ENCODE measurements at regions of chr19 and their contacts with region 1.

Region 1: DNA sequence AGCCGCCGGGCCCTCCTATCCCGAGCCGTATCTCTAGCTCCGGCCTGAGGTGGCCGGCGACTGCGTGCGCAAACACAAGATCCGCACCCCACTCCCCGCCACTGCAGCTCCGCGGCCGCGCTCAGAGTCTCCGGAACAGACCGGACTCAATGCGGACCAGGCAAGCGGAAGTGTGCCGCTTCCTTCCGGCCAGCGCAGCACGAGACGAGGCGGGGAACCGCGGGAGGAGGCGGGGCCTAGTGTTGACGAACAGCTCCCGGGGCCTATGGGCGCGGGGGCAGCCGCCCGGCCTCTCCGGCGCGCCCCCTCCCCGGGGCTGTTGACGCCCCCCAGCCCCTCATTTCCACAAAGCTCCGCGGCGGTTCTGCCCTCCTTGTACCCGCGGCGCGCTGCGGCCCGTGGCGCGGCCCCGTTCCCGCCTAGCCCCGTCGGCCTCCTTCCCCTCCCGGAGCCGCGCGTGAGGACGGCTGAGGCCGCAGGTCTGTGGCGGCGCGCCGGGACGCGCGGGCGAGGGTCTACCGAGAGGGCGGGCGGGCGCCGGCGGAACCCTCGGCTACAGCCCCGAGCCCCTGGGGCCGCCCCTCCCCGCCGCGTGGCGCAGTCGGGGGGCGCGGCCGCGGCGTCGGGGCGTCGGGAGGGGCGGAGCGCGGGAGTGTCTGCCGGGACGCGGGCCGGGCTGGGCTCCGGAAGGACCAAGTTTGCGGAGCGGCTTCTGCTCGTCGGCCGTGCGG is at the start of gene DPY19L3:
- DNase-seq: peak; percentile 78 to 94 (median 84)
- ATAC-seq: peak; percentile 87 to 89
- H3K4me3 Mint-ChIP-seq: peak within 1 kb of the TSS; percentile 79 to 94 (median 90)
- H3K27ac Mint-ChIP-seq: peak within 1 kb of the TSS; percentile 57 to 94 (median 94)
- H3K4me1 Mint-ChIP-seq: peaks cover 10 to 30% (median 27%) of the 10 kb centered on the region in 4 donors
- H3K27me3 Mint-ChIP-seq: no peaks in the 10 kb centered on the region
- polyA plus RNA-seq, gene DPY19L3: 2.5 to 4.3 (median 3.9) TPM

Region 2: DNA sequence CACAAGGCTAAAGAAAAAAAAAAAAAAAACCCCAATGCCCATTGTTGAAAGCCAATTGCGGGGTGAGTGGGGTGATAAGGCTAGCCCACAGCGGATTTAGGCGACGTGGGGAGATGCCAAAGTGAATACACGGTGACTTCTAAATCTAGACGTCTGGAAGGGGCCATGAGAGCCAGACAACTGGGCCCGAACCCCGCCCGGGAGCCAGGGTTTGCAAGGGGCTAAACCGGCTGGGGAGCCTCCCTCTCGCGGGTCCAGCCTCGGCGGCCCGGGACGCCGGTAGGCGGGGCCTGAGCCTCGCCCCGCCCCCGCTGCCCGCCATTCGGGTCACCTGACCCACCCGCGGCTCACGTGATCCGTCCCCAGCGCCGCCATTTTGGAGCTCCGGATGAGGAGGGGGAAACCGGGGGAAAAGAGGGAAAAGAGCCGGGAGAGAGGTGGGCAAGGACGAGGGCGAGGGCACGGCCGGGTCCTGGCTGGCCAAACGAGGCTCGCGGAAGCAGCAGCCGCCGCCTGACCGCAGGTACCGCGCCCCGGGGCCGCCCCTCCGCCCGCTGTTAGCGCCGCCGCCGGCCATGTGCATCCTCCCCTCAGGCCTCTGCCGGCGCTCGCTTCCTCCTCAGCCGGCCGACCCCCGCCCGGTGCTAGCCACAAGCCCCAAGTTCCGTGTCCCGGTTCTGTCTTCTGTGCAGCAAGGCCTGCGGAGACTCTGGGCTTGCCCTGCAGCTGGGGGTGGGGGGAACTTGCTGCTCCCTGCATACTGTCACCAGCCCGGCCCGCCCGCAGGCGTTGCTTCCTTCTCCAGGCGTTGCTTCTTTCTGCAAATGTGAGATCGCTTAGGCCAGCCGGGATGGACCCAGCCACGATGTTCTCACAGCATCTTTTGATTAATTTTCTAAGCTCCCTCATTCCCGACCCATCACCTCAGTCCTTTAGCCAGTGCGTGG is 60.1 kb before region 1 on chr19 and contains the start of gene ZNF507:
- POLR2A ChIA-PET with region 1: interaction called, 23 read pairs
- DNase-seq: peak; percentile 68 to 88 (median 80)
- ATAC-seq: peak; percentile 89 to 91
- H3K4me3 Mint-ChIP-seq: peak within 1 kb of the TSS; percentile 94 to 99 (median 97)
- H3K27ac Mint-ChIP-seq: peak within 1 kb of the TSS; percentile 87 to 98 (median 96)
- H3K4me1 Mint-ChIP-seq: peaks cover 15 to 49% (median 37%) of the 10 kb centered on the region in 4 donors
- H3K27me3 Mint-ChIP-seq: peaks cover 0 to 3% (median 0%) of the 10 kb centered on the region in 5 donors
- polyA plus RNA-seq, gene ZNF507: 7.9 to 8.0 (median 8.0) TPM

Region 3: DNA sequence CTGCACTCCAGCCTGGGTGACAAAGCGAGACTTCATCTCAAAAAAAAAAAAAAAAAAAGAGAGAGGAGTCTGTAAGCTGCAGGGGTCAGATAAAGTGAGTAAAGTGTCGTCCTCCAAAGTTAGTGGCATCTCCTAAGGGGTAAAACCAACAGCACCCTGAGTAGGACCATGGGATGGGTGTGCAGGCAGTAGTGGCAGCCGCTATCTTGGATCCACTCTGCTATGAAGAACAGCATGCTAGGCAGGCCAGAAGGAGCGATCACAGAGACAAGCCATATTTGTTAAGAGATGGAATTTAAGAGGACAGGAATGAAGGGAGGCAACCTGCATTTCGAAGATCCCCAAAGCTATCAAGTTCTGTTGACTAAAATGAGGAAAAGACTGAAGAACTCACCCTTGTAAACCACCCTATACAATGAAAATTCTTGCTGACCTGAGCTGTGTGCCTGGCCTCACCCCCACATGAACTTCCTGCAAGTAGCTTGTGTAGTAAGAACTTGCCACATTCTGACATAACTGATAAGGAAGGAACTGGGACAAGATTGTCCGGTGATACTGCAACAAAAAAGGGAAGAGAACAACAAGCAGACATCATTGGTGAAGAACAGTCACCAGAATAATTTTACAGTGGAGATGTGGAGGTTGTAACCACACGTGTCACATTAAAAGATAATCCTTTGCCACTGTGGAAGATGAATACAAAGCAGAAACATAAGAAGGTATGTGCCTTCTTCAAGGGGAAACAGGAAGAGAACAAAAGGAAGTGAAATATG is 16.2 kb after region 1 on chr19:
- POLR2A ChIA-PET with region 1: interaction called, 12 read pairs
- DNase-seq: peak in 1 of 10 donors; percentile 10
- ATAC-seq: peak in 1 of 2 donors; percentile 33
- H3K4me3 Mint-ChIP-seq: peak overlapping the region in 9 of 10 donors; percentile 4 to 71 (median 35)
- H3K27ac Mint-ChIP-seq: peak overlapping the region; percentile 52 to 87 (median 79)
- H3K4me1 Mint-ChIP-seq: peaks cover 12 to 17% (median 15%) of the 10 kb centered on the region in 4 donors
- H3K27me3 Mint-ChIP-seq: no peaks in the 10 kb centered on the region

Region 4: GRCh38 chr19:32580901-32581703 is 175.5 kb after region 1 on chr19 and contains the start of gene PDCD5:
- POLR2A ChIA-PET with region 1: interaction called, 16 read pairs
- DNase-seq: peak; percentile 88 to 99 (median 94)
- ATAC-seq: peak; percentile 85 to 93
- H3K4me3 Mint-ChIP-seq: peak within 1 kb of the TSS; percentile 91 to 97 (median 94)
- H3K27ac Mint-ChIP-seq: peak within 1 kb of the TSS; percentile 45 to 97 (median 94)
- H3K4me1 Mint-ChIP-seq: peaks cover 5 to 44% (median 34%) of the 10 kb centered on the region in 4 donors
- H3K27me3 Mint-ChIP-seq: peaks cover 0 to 4% (median 0%) of the 10 kb centered on the region in 5 donors
- polyA plus RNA-seq, gene PDCD5: 99.5 to 117 (median 109) TPM